ENCODE measurements at regions of chrX and their contacts with region 1.

Region 1: DNA sequence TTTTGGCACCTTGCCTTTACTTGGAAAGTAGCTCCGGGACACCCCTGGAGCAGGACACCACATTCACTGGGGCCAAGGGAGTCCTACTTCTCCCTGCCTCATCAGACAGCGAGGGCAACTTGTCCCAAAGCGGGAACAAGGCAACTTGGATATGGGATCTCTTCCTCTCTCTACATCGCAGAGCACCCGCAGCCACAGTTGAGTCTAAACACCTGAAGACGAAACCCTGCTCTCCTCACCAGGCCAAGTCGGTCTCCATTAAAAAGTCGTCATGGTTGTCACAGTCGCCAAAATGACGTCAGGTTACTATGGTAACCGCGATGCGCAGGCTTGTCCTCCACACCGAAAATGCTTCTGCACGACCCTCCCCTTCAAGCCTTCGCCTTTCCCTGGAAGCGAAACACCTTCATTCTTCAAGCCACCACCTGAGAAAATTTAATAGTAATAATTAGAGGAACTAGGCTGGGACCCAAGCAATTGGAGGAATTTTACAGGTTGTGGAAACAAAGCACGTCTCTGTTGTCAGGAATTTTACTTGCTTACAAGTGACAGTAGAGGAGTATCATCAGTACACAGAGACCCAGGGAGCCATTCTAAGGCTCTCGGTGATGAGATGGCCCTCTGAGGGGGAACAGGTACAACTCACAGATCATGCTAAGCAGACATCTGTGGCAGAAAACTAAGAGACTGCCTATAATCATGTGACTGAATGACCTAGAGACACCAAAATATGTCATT is 30.5 kb upstream of the TCEAL4 start:
- DNase-seq: peak; percentile 26 to 85 (median 65)
- ATAC-seq: peak; percentile 85
- H3K4me3 ChIP-seq: peak overlapping the region; percentile 54 to 70
- H3K4me3 Mint-ChIP-seq: peak overlapping the region; percentile 89
- H3K27ac ChIP-seq: peak overlapping the region; percentile 21 to 60
- H3K27ac Mint-ChIP-seq: peak overlapping the region; percentile 92
- H3K4me1 ChIP-seq: peaks cover 5% of the 10 kb centered on the region
- H3K4me1 Mint-ChIP-seq: peaks cover 8% of the 10 kb centered on the region
- H3K27me3 ChIP-seq: no peaks in the 10 kb centered on the region
- H3K27me3 Mint-ChIP-seq: peaks cover 2% of the 10 kb centered on the region
- CTCF ChIP-seq: no peak

Region 2: GRCh38 chrX:103585411-103586313 is 30.8 kb after region 1 on chrX and contains the start of gene TCEAL4:
- CTCF ChIA-PET with region 1: no interaction called
- POLR2A ChIA-PET with region 1: no interaction called
- intact Hi-C with region 1: loop called in 1 of 2 experiments (anchors 2 kb)
- DNase-seq: peak in 7 of 9 experiments; percentile 4 to 63 (median 38)
- ATAC-seq: peak; percentile 89
- H3K4me3 ChIP-seq: peak within 1 kb of the TSS; percentile 64 to 68
- H3K4me3 Mint-ChIP-seq: peak within 1 kb of the TSS; percentile 89
- H3K27ac ChIP-seq: peak within 1 kb of the TSS in 1 of 2 experiments; percentile 45
- H3K27ac Mint-ChIP-seq: peak within 1 kb of the TSS; percentile 78
- H3K4me1 ChIP-seq: no peaks in the 10 kb centered on the region
- H3K4me1 Mint-ChIP-seq: peaks cover 17% of the 10 kb centered on the region
- H3K27me3 ChIP-seq: no peaks in the 10 kb centered on the region
- H3K27me3 Mint-ChIP-seq: peaks cover under 1% of the 10 kb centered on the region
- CTCF ChIP-seq: no peak
- total RNA-seq, gene TCEAL4: 10.5 to 10.7 TPM

Region 3: GRCh38 chrX:103742339-103742738 is 187.5 kb after region 1 on chrX:
- CTCF ChIA-PET with region 1: no interaction called
- POLR2A ChIA-PET with region 1: no interaction called
- intact Hi-C with region 1: no loop called
- DNase-seq: no peak
- ATAC-seq: no peak
- H3K4me3 ChIP-seq: no peak overlapping the region
- H3K4me3 Mint-ChIP-seq: no peak overlapping the region
- H3K27ac ChIP-seq: no peak overlapping the region
- H3K27ac Mint-ChIP-seq: no peak overlapping the region
- H3K4me1 ChIP-seq: no peaks in the 10 kb centered on the region
- H3K4me1 Mint-ChIP-seq: no peaks in the 10 kb centered on the region
- H3K27me3 ChIP-seq: no peaks in the 10 kb centered on the region
- H3K27me3 Mint-ChIP-seq: no peaks in the 10 kb centered on the region
- CTCF ChIP-seq: no peak